WTC11 (cell line): ENCODE measurements at regions of chr11 and their contacts with region 1.

Region 1: GRCh38 chr11:6817694-6818093 is 18.2 kb upstream of the OR6A2 start:
- DNase-seq: peak; percentile 72
- ATAC-seq: peak; percentile 100
- H3K4me3 Mint-ChIP-seq: no peak overlapping the region
- H3K27ac Mint-ChIP-seq: no peak overlapping the region
- H3K4me1 Mint-ChIP-seq: peaks cover 4% of the 10 kb centered on the region
- H3K27me3 Mint-ChIP-seq: peaks cover 4% of the 10 kb centered on the region; the same call in 1 of the 2 replicates
- CTCF ChIP-seq: no peak

Region 2: DNA sequence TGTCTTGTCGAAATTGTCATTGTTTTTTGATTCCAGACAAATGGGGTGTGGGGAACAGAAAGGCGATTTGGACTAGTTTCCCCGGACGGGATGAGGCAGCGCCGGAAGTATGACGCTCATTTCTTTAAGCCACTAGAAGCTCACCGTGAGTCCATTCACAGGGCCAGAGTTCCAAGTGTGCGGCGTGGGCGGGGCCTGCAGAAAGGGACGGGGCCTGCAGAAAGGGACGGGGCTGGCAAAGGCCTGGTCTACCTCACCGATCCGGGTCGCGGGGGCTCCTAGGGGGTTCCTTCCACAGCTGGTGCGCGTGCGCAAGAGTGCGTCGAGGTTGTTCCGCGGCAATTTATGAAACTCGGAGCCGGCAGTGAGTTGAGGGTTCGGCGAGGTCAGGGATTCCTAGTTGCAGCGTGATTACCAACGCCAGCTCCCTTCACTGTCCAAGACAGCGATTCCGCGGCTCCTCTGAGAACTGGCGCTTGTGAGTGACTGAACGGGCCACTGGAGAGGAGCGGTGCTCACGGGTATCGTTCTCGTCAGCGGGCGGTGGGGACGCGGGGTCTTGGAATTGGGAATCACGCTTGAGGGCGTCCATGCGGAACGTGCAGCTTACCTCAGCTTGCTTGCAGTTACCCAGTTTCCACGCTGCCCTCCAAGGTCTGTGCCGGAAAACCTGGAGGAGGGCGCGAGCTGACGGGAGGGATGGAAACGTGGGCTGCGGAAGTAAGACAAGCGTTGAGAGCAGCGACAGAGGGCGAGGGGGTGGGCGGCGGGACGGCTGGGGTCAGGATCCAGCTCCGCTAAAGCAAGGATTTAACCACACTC is 108.7 kb after region 1 on chr11 and contains the start of gene ZNF215:
- CTCF ChIA-PET with region 1: interaction called, 22 read pairs
- POLR2A ChIA-PET with region 1: no interaction called
- DNase-seq: peak; percentile 89
- ATAC-seq: peak; percentile 94
- H3K4me3 Mint-ChIP-seq: peak within 1 kb of the TSS; percentile 99
- H3K27ac Mint-ChIP-seq: peak within 1 kb of the TSS; percentile 96
- H3K4me1 Mint-ChIP-seq: peaks cover 36% of the 10 kb centered on the region
- H3K27me3 Mint-ChIP-seq: no peaks in the 10 kb centered on the region; the same call in 1 of the 2 replicates
- CTCF ChIP-seq: no peak
- total RNA-seq, gene ZNF215: 13.8 to 15.8 TPM (median 14.1 TPM) in 3 replicates

Region 3: DNA sequence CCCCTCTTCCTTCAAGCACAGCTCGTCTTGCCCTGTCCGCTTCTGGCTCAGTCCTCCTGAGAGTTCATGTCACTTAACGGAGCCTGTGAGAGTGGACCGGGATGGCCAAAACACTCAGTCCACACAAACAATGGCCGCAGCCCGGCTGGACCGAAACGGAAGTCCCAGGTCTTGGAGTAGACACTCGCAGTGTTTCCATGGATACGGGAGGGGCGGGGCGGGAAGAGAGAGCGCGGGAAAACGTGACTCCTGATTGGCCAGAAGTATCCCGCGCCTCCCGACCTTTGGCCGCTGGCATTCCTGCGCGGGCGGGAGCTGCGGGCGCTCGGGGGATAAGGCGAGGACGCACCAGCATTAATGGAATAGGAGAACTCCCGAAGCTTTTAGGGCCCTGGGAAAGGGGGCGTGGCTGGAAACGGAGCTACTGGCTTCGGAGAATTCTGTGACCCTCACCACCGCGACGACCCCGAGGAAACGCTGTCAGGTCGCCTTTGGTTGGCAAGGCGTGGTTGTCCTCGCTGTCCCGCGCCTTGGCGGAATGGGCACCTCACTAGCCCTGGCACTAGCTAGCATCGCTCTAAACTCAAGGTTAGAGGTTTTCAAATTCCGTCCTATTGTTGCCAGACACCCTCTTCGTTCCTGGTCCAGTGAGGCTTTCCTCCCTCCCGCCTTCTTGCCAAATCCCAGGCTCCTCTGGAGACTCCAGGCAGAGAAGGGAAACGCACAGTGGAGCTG is 202.7 kb after region 1 on chr11 and contains the starts of genes NLRP14 and ZNF214:
- CTCF ChIA-PET with region 1: interaction called, 24 read pairs
- POLR2A ChIA-PET with region 1: no interaction called
- DNase-seq: peak; percentile 94
- ATAC-seq: peak; percentile 98
- H3K4me3 Mint-ChIP-seq: peak within 1 kb of the TSS; percentile 100
- H3K27ac Mint-ChIP-seq: peak within 1 kb of the TSS; percentile 97
- H3K4me1 Mint-ChIP-seq: peaks cover 9% of the 10 kb centered on the region
- H3K27me3 Mint-ChIP-seq: peaks cover 36% of the 10 kb centered on the region
- CTCF ChIP-seq: no peak
- total RNA-seq, gene NLRP14: 0.05 to 0.16 TPM (median 0.07 TPM) in 3 replicates
- total RNA-seq, gene ZNF214: 3.5 to 4.1 TPM (median 4.0 TPM) in 3 replicates

Region 4: GRCh38 chr11:7098235-7098832 is 280.6 kb after region 1 on chr11:
- CTCF ChIA-PET with region 1: interaction called, 12 read pairs
- POLR2A ChIA-PET with region 1: no interaction called
- DNase-seq: no peak
- ATAC-seq: peak; percentile 91
- H3K4me3 Mint-ChIP-seq: no peak overlapping the region
- H3K27ac Mint-ChIP-seq: no peak overlapping the region
- H3K4me1 Mint-ChIP-seq: no peaks in the 10 kb centered on the region
- H3K27me3 Mint-ChIP-seq: peaks cover 7% of the 10 kb centered on the region
- CTCF ChIP-seq: peak; percentile 43; the same call in 1 of the 2 replicates